ENCODE measurements at regions of chr1 and their contacts with region 1.

Region 1: GRCh38 chr1:18597160-18598042 is 33.2 kb upstream of the PAX7 start:
- DNase-seq: peak; percentile 21
- H3K4me3 ChIP-seq: no peak overlapping the region
- H3K27ac ChIP-seq: no peak overlapping the region
- H3K4me1 ChIP-seq: no peaks in the 10 kb centered on the region
- H3K27me3 ChIP-seq: no peaks in the 10 kb centered on the region
- CTCF ChIP-seq: peak; percentile 91 to 99

Region 2: GRCh38 chr1:18661404-18662284 is 64.2 kb after region 1 on chr1:
- CTCF ChIA-PET with region 1: no interaction called
- dilution Hi-C with region 1: no loop called
- in situ Hi-C with region 1: loop called in 1 of 2 experiments (anchors 5 kb)
- intact Hi-C with region 1: no loop called
- DNase-seq: no peak
- H3K4me3 ChIP-seq: no peak overlapping the region
- H3K27ac ChIP-seq: no peak overlapping the region
- H3K4me1 ChIP-seq: peaks cover 6% of the 10 kb centered on the region
- H3K27me3 ChIP-seq: no peaks in the 10 kb centered on the region
- CTCF ChIP-seq: no peak

Region 3: DNA sequence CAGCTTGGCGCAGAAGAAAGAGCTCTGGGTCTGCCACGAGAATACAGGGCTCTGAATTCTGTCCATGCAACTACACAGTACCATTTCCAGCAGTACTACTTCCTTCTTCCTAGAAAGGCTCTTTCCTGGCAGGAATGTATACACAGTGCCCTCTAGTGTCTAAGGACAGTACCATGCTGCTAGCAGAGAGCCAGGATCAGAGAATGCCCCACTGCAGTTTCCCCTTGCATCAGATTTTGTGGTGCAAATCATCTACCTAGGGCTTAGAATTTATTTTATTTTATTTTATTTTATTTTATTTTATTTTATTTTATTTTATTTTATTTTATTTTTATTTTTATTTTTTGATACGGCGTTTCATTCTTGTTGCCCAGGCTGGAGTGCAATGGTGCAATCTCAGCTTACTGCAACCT is 84.0 kb after region 1 on chr1:
- CTCF ChIA-PET with region 1: interaction called, 8 read pairs
- dilution Hi-C with region 1: loop called (anchors 5 kb)
- in situ Hi-C with region 1: loop called (anchors 5 kb)
- intact Hi-C with region 1: loop called (anchors 1 kb)
- DNase-seq: peak; percentile 52
- H3K4me3 ChIP-seq: no peak overlapping the region
- H3K27ac ChIP-seq: no peak overlapping the region
- H3K4me1 ChIP-seq: no peaks in the 10 kb centered on the region
- H3K27me3 ChIP-seq: no peaks in the 10 kb centered on the region
- CTCF ChIP-seq: peak; percentile 85 to 91

Region 4: GRCh38 chr1:18875107-18875795 is 277.9 kb after region 1 on chr1:
- CTCF ChIA-PET with region 1: interaction called, 5 read pairs
- dilution Hi-C with region 1: no loop called
- in situ Hi-C with region 1: no loop called
- intact Hi-C with region 1: loop called (anchors 1 kb)
- DNase-seq: peak; percentile 65
- H3K4me3 ChIP-seq: no peak overlapping the region
- H3K27ac ChIP-seq: no peak overlapping the region
- H3K4me1 ChIP-seq: no peaks in the 10 kb centered on the region
- H3K27me3 ChIP-seq: no peaks in the 10 kb centered on the region
- CTCF ChIP-seq: peak; percentile 83

Region 5: DNA sequence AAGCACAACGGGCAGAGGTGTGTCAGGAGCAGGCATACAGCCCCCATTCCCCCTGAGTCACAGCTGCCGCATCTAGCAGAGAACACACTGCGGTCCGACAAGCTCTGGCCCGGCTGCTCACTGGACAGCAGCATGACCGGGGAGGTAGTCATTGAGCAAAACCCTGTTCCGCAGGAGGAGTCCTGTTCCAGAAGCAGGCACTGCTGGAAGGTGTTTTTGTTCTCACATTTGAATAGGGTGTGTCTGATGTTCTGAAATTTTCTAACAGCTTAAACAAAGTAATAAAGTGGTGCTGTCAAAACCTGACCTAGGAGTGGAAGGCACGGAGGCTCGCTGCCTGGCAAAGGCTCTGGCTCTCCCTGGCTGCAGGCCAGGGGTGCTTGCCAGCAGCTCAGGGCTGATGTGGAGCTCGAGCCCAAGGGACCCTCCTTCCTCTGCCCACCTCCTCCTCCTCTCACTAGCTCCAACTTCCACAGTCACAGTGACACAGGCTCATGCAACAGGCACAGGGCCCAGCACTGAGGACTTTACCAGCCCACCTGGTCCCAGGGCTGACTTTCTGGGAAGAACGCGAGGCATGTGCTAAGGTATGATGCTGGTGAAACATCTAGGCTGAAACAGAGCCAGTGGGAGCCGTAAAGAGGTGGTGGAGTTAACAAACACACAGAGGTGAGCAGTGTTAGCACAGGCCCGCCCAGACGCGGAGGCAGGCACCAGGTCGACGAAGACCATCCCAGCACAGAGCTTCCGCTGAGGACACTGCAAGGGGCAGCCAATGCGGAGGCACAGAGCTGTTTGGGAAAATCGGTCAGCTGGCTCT is 477.7 kb after region 1 on chr1:
- CTCF ChIA-PET with region 1: no interaction called
- dilution Hi-C with region 1: no loop called
- in situ Hi-C with region 1: no loop called
- intact Hi-C with region 1: loop called (anchors 5 kb)
- DNase-seq: peak; percentile 97
- H3K4me3 ChIP-seq: no peak overlapping the region
- H3K27ac ChIP-seq: peak overlapping the region; percentile 71
- H3K4me1 ChIP-seq: peaks cover 48% of the 10 kb centered on the region
- H3K27me3 ChIP-seq: no peaks in the 10 kb centered on the region
- CTCF ChIP-seq: no peak